ENCODE measurements at regions of chr2 and their contacts with region 1.

Region 1: GRCh38 chr2:231336700-231337099 is 58.8 kb upstream of the B3GNT7 start:
- DNase-seq: no peak
- H3K4me3 ChIP-seq: no peak overlapping the region
- H3K27ac ChIP-seq: no peak overlapping the region
- H3K4me1 ChIP-seq: no peaks in the 10 kb centered on the region
- H3K27me3 ChIP-seq: no peaks in the 10 kb centered on the region
- CTCF ChIP-seq: no peak

Region 2: GRCh38 chr2:230053753-230054478 is 1282.8 kb before region 1 on chr2:
- CTCF ChIA-PET with region 1: no interaction called
- POLR2A ChIA-PET with region 1: no interaction called
- intact Hi-C with region 1: no loop called
- DNase-seq: peak; percentile 54 to 90
- H3K4me3 ChIP-seq: peak overlapping the region; percentile 15; the same call in 1 of the 2 replicates
- H3K27ac ChIP-seq: peak overlapping the region; percentile 84
- H3K4me1 ChIP-seq: peaks cover 31% of the 10 kb centered on the region
- H3K27me3 ChIP-seq: no peaks in the 10 kb centered on the region
- CTCF ChIP-seq: no peak

Region 3: GRCh38 chr2:231017231-231017598 is 319.5 kb before region 1 on chr2:
- CTCF ChIA-PET with region 1: no interaction called
- POLR2A ChIA-PET with region 1: no interaction called
- intact Hi-C with region 1: no loop called
- DNase-seq: no peak
- H3K4me3 ChIP-seq: no peak overlapping the region
- H3K27ac ChIP-seq: no peak overlapping the region
- H3K4me1 ChIP-seq: peaks cover 25% of the 10 kb centered on the region
- H3K27me3 ChIP-seq: no peaks in the 10 kb centered on the region
- CTCF ChIP-seq: no peak

Region 4: DNA sequence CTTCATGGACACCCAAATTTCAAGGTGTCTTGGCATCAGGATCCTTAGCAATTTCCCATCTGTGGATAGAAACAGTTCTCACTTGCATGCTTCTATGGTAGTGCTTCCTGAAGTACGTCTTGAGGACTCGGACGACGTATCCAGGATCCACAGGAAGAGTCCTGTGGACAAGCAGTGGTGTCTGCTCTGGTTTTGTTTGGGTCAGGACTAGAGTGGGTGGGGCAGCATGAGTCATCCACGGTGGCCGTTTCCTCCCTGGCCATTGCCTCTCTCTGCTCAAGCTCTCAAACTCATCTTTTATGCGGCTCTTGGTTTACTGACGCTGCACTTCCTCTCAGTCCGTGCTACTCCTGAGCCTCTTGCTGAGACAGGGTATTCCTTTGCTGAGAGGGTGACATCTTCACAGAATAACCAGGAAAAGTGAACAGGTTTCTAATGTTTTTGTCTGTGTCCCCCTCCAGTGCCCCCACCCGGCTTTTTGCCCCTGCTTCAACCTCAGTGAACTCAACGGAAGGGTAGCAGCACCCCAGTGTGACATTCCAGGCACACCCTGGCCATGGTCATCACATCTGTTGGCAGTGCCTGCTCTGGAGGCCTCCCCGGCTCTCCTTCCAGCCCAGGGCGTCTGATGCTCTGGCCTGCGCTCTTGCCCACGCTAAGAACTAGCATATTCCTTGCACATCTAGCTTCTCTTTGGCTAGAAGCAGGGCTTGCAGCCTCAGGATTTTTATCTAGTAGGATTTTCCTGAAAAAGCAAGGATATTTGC is 76.1 kb before region 1 on chr2:
- CTCF ChIA-PET with region 1: no interaction called
- POLR2A ChIA-PET with region 1: no interaction called
- intact Hi-C with region 1: no loop called
- DNase-seq: no peak
- H3K4me3 ChIP-seq: no peak overlapping the region
- H3K27ac ChIP-seq: no peak overlapping the region
- H3K4me1 ChIP-seq: no peaks in the 10 kb centered on the region
- H3K27me3 ChIP-seq: no peaks in the 10 kb centered on the region
- CTCF ChIP-seq: no peak

Region 5: GRCh38 chr2:231425291-231425810 is 88.7 kb after region 1 on chr2:
- CTCF ChIA-PET with region 1: no interaction called
- POLR2A ChIA-PET with region 1: interaction called, 11 read pairs
- intact Hi-C with region 1: no loop called
- DNase-seq: no peak
- H3K4me3 ChIP-seq: no peak overlapping the region
- H3K27ac ChIP-seq: no peak overlapping the region
- H3K4me1 ChIP-seq: peaks cover 11% of the 10 kb centered on the region
- H3K27me3 ChIP-seq: no peaks in the 10 kb centered on the region
- CTCF ChIP-seq: no peak